ENCODE measurements at regions of chr19 and their contacts with region 1.

Region 1: DNA sequence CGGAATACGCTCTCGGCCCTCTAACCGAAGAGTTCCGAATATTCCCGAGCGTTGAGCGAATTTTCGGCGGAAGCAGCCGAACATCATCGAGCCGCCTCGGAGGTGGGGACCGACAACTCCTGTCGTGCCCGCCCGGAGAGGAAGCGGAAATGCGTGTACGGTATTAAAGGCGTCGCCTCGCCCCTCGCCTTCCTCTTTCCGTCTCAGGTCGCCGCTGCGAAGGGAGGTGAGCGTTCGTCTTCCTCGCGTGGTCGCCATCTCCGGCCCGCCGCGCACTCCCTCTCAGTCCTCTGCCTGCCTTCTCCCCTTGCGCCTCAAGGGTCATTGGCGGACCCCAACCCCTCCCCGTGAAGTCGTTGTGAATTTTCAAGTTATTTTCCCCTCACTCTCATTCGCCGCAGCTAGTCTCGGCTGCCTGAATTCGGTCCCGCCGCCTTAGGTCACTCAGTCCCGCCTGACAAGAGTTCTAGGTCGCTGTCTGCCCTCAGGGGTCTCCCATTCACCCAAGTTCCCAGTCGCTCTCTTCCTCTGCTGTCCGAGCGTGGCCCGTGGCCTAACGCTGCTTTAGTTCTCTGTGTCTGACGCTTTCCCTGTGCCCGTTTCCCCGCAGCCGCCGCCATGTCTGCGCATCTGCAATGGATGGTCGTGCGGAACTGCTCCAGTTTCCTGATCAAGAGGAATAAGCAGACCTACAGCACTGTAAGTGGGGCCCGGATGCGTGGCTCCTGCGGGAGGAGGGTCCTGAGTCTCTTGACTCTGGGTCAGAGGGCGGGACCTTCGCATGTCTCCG is at the start of gene RPL28:
- DNase-seq: peak; percentile 99
- H3K4me3 Mint-ChIP-seq: peak within 1 kb of the TSS; percentile 100
- H3K27ac Mint-ChIP-seq: peak within 1 kb of the TSS; percentile 98
- H3K4me1 Mint-ChIP-seq: peaks cover 73% of the 10 kb centered on the region
- H3K27me3 Mint-ChIP-seq: no peaks in the 10 kb centered on the region
- total RNA-seq, gene RPL28: 3,004 to 3,026 TPM

Region 2: DNA sequence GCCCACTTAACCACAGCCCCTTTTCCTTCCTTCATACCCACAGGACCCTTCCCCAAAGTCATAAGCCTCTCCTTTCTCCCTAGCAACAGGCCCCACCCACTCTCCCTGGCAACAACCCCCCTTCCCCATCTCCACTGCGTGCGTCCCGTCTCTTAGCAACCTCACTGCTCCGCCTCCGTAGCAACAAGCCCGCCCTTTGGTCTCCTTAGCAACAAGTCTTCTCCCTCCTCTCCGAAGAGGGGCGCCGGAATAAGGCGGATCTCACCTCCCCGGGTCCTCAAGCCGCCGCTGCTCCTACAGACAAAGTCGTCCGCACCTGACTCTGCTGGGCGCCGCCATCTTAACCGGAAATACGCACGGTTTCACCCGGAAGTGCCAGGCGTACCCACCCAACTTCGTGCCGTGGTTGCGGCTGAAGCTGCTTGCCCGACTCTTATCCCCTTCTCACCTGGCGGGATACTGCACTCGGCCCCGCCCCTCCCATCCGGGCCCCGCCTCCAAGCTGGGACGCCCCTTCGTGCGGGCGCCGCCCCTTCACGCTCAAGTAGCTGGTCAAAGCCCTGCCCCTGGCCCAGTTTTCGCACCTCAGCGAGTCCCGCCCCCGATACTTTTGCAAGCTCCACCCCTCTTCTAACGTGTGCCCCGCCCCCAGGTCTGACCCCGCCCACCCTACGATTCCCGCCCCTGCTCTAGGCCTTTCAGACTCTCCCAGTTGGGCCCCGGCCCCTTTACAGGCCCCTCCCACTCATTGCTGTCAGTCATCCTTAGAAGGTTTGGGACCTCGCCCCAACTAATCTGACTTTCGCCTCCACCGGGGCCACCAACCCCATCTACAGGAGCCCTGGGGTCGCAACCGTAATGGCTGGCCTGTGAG is 105.9 kb before region 1 on chr19 and contains the start of gene HSPBP1:
- CTCF ChIA-PET with region 1: interaction called, 4 read pairs
- POLR2A ChIA-PET with region 1: interaction called, 19 read pairs
- DNase-seq: peak; percentile 98
- H3K4me3 Mint-ChIP-seq: peak within 1 kb of the TSS; percentile 100
- H3K27ac Mint-ChIP-seq: peak within 1 kb of the TSS; percentile 97
- H3K4me1 Mint-ChIP-seq: peaks cover 57% of the 10 kb centered on the region
- H3K27me3 Mint-ChIP-seq: peaks cover 8% of the 10 kb centered on the region
- total RNA-seq, gene HSPBP1: 28.9 to 29.0 TPM

Region 3: GRCh38 chr19:55301459-55302317 is 84.2 kb before region 1 on chr19:
- CTCF ChIA-PET with region 1: interaction called, 30 read pairs
- POLR2A ChIA-PET with region 1: interaction called, 23 read pairs
- DNase-seq: peak; percentile 94
- H3K4me3 Mint-ChIP-seq: peak overlapping the region; percentile 76
- H3K27ac Mint-ChIP-seq: peak overlapping the region; percentile 73
- H3K4me1 Mint-ChIP-seq: peaks cover 14% of the 10 kb centered on the region
- H3K27me3 Mint-ChIP-seq: peaks cover 2% of the 10 kb centered on the region

Region 4: DNA sequence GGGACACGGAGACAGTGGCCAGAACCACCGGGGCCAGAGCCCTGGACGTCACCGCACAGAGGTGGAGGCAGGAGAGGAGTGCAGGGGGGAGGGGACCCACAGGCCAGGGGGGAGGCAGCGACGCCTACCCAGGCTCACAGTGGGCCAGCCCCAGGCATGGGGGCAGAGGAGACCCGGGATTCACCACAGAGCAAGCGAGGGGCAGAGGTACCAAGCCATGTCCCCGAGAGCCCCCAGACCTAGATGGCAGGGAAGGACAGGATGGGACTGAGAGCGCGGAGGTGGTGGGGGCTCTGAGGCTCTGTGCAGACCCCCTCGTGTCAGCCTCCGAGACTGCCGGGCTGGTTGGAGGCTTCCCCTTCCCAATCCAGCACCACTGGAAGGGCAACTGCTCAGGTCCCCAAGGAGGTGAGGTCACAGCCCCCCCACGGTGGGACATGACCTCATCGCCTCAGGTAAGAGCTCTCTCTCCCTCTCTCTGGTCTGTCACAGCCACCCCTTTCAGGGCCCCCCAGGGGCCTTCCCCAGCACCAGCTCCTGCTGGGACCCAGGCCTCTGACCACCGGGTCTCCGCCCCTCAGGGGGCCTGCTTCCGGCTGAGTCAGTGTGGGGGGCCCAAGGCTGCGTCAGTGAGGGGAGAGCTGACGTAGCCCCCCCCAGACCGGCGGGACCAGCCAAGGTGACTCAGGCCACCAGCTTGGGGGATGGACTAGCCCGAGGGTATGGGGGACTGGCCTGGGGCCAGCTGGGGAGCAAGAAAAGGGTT is 13.4 kb before region 1 on chr19:
- CTCF ChIA-PET with region 1: no interaction called
- POLR2A ChIA-PET with region 1: interaction called, 17 read pairs
- DNase-seq: no peak
- H3K4me3 Mint-ChIP-seq: no peak overlapping the region
- H3K27ac Mint-ChIP-seq: no peak overlapping the region
- H3K4me1 Mint-ChIP-seq: peaks cover 4% of the 10 kb centered on the region
- H3K27me3 Mint-ChIP-seq: peaks cover 37% of the 10 kb centered on the region

Region 5: DNA sequence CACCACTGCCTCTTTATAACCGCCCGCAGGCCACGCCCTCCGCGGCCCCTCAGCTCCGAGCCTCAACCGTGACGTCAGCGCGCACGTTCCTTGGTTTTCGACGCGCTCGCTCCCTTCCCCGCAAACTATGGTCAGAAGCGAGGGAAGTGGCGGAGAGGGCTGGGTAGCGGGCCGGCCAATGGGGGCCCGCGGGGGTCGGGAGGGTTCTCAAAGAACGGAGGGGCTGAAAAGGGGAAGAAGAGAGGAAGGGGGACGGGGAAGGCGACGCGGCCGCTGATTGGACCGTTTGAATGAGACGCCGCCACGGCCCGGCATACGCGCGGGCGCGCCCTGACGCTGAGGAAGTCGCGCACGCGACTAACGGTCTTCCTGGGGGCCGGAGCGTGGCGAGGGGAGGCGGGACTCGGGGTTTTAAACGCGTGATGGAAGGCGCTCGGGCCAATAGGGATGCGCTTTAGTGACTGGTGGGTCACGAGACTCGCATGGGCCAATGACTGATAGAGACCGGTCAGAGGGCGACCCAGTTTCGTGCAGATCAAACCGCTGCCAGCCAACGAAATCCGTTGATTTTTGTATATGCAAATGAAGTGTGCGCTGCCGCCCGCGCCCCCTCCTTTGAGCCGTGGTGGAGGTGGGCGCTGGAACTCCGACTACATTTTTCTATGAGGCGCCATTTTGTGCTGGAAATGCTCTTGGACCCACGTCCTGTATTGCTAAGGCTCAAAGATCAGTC is 22.0 kb after region 1 on chr19:
- CTCF ChIA-PET with region 1: interaction called, 5 read pairs
- POLR2A ChIA-PET with region 1: interaction called, 224 read pairs
- DNase-seq: peak; percentile 99
- H3K4me3 Mint-ChIP-seq: peak overlapping the region; percentile 83
- H3K27ac Mint-ChIP-seq: peak overlapping the region; percentile 97
- H3K4me1 Mint-ChIP-seq: peaks cover 45% of the 10 kb centered on the region
- H3K27me3 Mint-ChIP-seq: peaks cover 14% of the 10 kb centered on the region

Region 6: GRCh38 chr19:55526216-55527196 is 140.6 kb after region 1 on chr19:
- CTCF ChIA-PET with region 1: no interaction called
- POLR2A ChIA-PET with region 1: no interaction called
- DNase-seq: no peak
- H3K4me3 Mint-ChIP-seq: no peak overlapping the region
- H3K27ac Mint-ChIP-seq: no peak overlapping the region
- H3K4me1 Mint-ChIP-seq: no peaks in the 10 kb centered on the region
- H3K27me3 Mint-ChIP-seq: no peaks in the 10 kb centered on the region

Region 7: GRCh38 chr19:55549500-55550320 is 163.8 kb after region 1 on chr19:
- CTCF ChIA-PET with region 1: no interaction called
- POLR2A ChIA-PET with region 1: no interaction called
- DNase-seq: no peak
- H3K4me3 Mint-ChIP-seq: no peak overlapping the region
- H3K27ac Mint-ChIP-seq: no peak overlapping the region
- H3K4me1 Mint-ChIP-seq: no peaks in the 10 kb centered on the region
- H3K27me3 Mint-ChIP-seq: peaks cover 7% of the 10 kb centered on the region